GM12878 (cell line): ENCODE measurements at regions of chr21 and their contacts with region 1.

Region 1: GRCh38 chr21:33441489-33442477 is 38.0 kb downstream of the TMEM50B start:
- DNase-seq: peak; percentile 91
- ATAC-seq: peak; percentile 87
- H3K4me3 ChIP-seq: no peak overlapping the region
- H3K27ac ChIP-seq: peak overlapping the region; percentile 90
- H3K4me1 ChIP-seq: peaks cover 19% of the 10 kb centered on the region
- H3K27me3 ChIP-seq: no peaks in the 10 kb centered on the region
- CTCF ChIP-seq: no peak
- EP300 ChIP-seq: no peak; a peak in 1 of 4 replicates
- POLR2A ChIP-seq: no peak; the same call in 1 of the 2 replicates
- RAD21 ChIP-seq: no peak

Region 2: DNA sequence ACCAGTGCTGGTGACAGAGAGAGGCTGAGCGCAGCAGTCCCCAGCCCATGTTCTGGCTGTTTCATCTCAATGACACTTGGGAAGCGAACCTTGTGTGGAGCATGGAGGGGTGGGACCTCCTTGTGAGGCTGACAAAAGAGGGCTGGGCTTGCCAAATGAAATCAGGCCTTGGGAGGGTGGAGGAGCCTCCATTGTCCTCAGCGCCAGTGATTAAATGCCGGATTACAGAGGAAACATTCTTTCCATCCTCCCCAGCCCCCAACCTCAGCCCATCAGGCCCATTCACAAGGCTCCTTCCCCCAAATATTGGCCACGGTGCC is 606.9 kb before region 1 on chr21:
- CTCF ChIA-PET with region 1: interaction called, 4 read pairs
- POLR2A ChIA-PET with region 1: no interaction called
- RAD21 ChIA-PET with region 1: no interaction called
- SMC1A ChIA-PET with region 1: interaction called, 6 read pairs
- in situ Hi-C with region 1: loop called (anchors 5 kb)
- intact Hi-C with region 1: loop called (anchors 10 kb)
- DNase-seq: no peak
- ATAC-seq: no peak
- H3K4me3 ChIP-seq: no peak overlapping the region
- H3K27ac ChIP-seq: no peak overlapping the region
- H3K4me1 ChIP-seq: no peaks in the 10 kb centered on the region
- H3K27me3 ChIP-seq: no peaks in the 10 kb centered on the region
- CTCF ChIP-seq: no peak
- EP300 ChIP-seq: no peak
- POLR2A ChIP-seq: no peak
- RAD21 ChIP-seq: no peak

Region 3: DNA sequence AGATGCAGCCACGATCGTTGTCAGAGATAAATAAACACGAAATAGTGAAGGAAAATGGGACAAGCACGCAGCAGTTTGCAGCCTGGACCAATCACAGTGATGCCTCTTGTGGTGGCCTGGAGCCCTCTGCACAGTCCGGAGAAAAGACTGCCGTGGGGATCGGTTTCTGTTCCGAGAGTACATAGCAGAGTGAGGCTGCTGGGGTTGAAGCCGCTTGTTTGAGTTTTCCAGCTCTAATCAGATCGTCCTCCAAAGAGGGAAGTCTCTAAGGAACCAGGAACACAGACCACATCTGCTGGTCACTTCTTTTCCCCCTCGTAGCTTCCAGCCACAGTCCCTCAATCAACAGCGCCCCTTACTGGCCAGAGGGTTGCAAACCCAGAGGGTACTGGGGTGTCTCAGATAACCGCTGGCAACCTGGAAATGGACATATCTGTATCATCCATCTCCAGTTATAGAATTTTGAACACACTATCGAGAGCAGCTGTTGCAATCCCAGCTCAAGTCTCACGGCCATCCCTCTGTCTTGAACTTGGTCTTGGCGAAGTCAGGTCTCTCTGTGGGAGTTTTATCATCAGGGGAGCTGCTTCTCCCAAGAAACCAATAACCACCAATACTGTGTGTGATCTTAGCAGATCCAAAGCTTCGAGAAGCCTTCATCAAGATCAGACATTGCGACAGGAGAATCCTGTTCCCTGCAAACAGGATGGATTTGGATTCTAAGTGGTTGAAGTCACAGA is 314.5 kb before region 1 on chr21:
- CTCF ChIA-PET with region 1: interaction called, 11 read pairs
- POLR2A ChIA-PET with region 1: no interaction called
- RAD21 ChIA-PET with region 1: no interaction called
- SMC1A ChIA-PET with region 1: no interaction called
- in situ Hi-C with region 1: no loop called
- intact Hi-C with region 1: loop called (anchors 5 kb)
- DNase-seq: peak; percentile 19
- ATAC-seq: peak; percentile 93
- H3K4me3 ChIP-seq: peak overlapping the region; percentile 38; the same call in 1 of the 2 replicates
- H3K27ac ChIP-seq: no peak overlapping the region
- H3K4me1 ChIP-seq: no peaks in the 10 kb centered on the region
- H3K27me3 ChIP-seq: peaks cover 2% of the 10 kb centered on the region in 2 experiments; a peak in 3 of 4 replicates
- CTCF ChIP-seq: peak; percentile 76 to 89 (median 82)
- EP300 ChIP-seq: no peak
- POLR2A ChIP-seq: no peak
- RAD21 ChIP-seq: peak; percentile 86

Region 4: GRCh38 chr21:33266050-33266788 is 175.6 kb before region 1 on chr21 and contains the start of gene IL10RB:
- CTCF ChIA-PET with region 1: interaction called, 5 read pairs
- POLR2A ChIA-PET with region 1: interaction called, 4 read pairs
- RAD21 ChIA-PET with region 1: interaction called, 5 read pairs
- SMC1A ChIA-PET with region 1: interaction called, 10 read pairs
- in situ Hi-C with region 1: no loop called
- intact Hi-C with region 1: loop called (anchors 2 kb)
- DNase-seq: peak; percentile 27
- ATAC-seq: peak; percentile 72
- H3K4me3 ChIP-seq: peak within 1 kb of the TSS; percentile 81
- H3K27ac ChIP-seq: peak within 1 kb of the TSS; percentile 96
- H3K4me1 ChIP-seq: peaks cover 28% of the 10 kb centered on the region
- H3K27me3 ChIP-seq: no peaks in the 10 kb centered on the region
- CTCF ChIP-seq: no peak
- EP300 ChIP-seq: no peak
- POLR2A ChIP-seq: peak; percentile 88
- RAD21 ChIP-seq: no peak
- polyA plus RNA-seq, gene IL10RB: 15.0 to 23.3 TPM

Region 5: GRCh38 chr21:33348706-33349105 is 93.1 kb before region 1 on chr21:
- CTCF ChIA-PET with region 1: interaction called, 10 read pairs
- POLR2A ChIA-PET with region 1: no interaction called
- RAD21 ChIA-PET with region 1: interaction called, 5 read pairs
- SMC1A ChIA-PET with region 1: interaction called, 3 read pairs
- in situ Hi-C with region 1: no loop called
- intact Hi-C with region 1: no loop called
- DNase-seq: no peak
- ATAC-seq: no peak
- H3K4me3 ChIP-seq: no peak overlapping the region
- H3K27ac ChIP-seq: no peak overlapping the region
- H3K4me1 ChIP-seq: no peaks in the 10 kb centered on the region
- H3K27me3 ChIP-seq: no peaks in the 10 kb centered on the region
- CTCF ChIP-seq: no peak
- EP300 ChIP-seq: no peak
- POLR2A ChIP-seq: no peak
- RAD21 ChIP-seq: no peak

Region 6: GRCh38 chr21:33374450-33375096 is 67.2 kb before region 1 on chr21:
- CTCF ChIA-PET with region 1: interaction called, 29 read pairs
- POLR2A ChIA-PET with region 1: no interaction called
- RAD21 ChIA-PET with region 1: interaction called, 148 read pairs
- SMC1A ChIA-PET with region 1: interaction called, 36 read pairs
- in situ Hi-C with region 1: no loop called
- intact Hi-C with region 1: no loop called
- DNase-seq: no peak
- ATAC-seq: peak; percentile 87
- H3K4me3 ChIP-seq: no peak overlapping the region
- H3K27ac ChIP-seq: no peak overlapping the region
- H3K4me1 ChIP-seq: peaks cover 17% of the 10 kb centered on the region
- H3K27me3 ChIP-seq: no peaks in the 10 kb centered on the region
- CTCF ChIP-seq: peak; percentile 62 to 74 (median 63)
- EP300 ChIP-seq: peak in 1 of 2 experiments; percentile 27; a peak in 1 of 4 replicates
- POLR2A ChIP-seq: no peak
- RAD21 ChIP-seq: peak; percentile 77

Region 7: DNA sequence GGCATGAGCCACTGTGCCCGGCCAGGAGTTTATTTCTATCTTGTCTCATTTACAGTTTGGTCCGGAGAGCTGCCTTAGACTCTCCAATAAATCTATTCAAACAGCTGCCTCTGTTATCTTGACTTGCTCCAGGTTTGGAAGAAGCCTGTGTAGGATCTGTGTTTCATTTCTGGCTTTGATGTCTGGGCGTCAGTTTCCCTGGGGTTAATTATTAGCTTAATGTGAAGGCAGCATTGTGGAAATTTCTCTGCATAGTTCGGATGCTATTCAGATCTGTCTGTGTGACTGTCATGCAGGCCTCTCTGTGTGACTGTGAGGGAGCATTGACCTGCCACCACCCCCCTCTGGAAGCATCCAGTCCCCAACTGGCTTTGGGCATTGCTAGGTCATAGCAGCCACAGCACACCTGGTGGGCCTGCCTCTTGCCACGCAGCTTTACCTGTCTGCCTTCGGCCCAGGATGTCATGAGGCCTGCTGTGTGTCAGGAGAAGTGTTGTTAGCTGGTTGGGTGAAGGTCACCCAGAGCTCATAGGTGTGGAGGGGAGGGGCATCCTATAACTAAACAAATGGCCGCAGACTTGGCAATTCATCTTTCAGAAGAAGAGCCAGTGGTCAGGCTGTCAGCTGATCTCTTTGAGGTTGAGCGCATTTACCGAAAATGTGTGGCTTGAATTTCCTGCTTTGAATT is 28.8 kb before region 1 on chr21:
- CTCF ChIA-PET with region 1: interaction called, 11 read pairs
- POLR2A ChIA-PET with region 1: interaction called, 5 read pairs
- RAD21 ChIA-PET with region 1: interaction called, 53 read pairs
- SMC1A ChIA-PET with region 1: interaction called, 42 read pairs
- in situ Hi-C with region 1: no loop called
- intact Hi-C with region 1: no loop called
- DNase-seq: no peak
- ATAC-seq: peak; percentile 84
- H3K4me3 ChIP-seq: peak overlapping the region; percentile 10; the same call in 1 of the 2 replicates
- H3K27ac ChIP-seq: peak overlapping the region; percentile 22; the same call in 1 of the 2 replicates
- H3K4me1 ChIP-seq: peaks cover 22% of the 10 kb centered on the region
- H3K27me3 ChIP-seq: no peaks in the 10 kb centered on the region
- CTCF ChIP-seq: no peak
- EP300 ChIP-seq: no peak
- POLR2A ChIP-seq: peak; percentile 57
- RAD21 ChIP-seq: no peak

Region 8: DNA sequence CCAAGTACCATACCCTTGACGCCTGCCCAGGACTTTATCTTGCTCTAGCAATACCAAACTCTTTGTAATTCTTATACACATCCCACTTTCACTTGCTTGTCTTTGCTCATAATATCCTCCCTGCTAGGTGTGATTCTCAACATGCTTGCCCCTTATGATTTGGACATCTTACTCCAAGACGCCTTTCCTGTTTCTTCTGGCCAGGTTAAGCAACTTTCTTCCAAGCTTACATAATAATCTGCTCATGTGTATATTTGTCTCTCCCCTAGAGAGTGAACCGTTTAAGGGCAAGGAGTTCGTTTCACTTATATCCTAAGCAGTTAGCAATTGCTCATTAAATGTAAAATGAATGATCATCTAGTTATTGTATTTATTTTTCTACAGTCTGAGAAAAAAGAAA is 177.9 kb after region 1 on chr21:
- CTCF ChIA-PET with region 1: no interaction called
- POLR2A ChIA-PET with region 1: no interaction called
- RAD21 ChIA-PET with region 1: no interaction called
- SMC1A ChIA-PET with region 1: no interaction called
- in situ Hi-C with region 1: no loop called
- intact Hi-C with region 1: no loop called
- DNase-seq: no peak
- ATAC-seq: no peak
- H3K4me3 ChIP-seq: no peak overlapping the region
- H3K27ac ChIP-seq: no peak overlapping the region
- H3K4me1 ChIP-seq: no peaks in the 10 kb centered on the region
- H3K27me3 ChIP-seq: no peaks in the 10 kb centered on the region
- CTCF ChIP-seq: no peak
- EP300 ChIP-seq: no peak
- POLR2A ChIP-seq: no peak
- RAD21 ChIP-seq: no peak